ENCODE measurements at regions of chr3 and their contacts with region 1.

Region 1: GRCh38 chr3:58008140-58009025 is at the start of gene FLNB:
- DNase-seq: no peak
- H3K4me3 ChIP-seq: peak within 1 kb of the TSS; percentile 100
- H3K27ac ChIP-seq: peak within 1 kb of the TSS; percentile 52
- H3K27me3 ChIP-seq: no peaks in the 10 kb centered on the region
- CTCF ChIP-seq: peak; percentile 74
- polyA plus RNA-seq, gene FLNB: 89.6 and 90.4 TPM in 2 replicates

Region 2: DNA sequence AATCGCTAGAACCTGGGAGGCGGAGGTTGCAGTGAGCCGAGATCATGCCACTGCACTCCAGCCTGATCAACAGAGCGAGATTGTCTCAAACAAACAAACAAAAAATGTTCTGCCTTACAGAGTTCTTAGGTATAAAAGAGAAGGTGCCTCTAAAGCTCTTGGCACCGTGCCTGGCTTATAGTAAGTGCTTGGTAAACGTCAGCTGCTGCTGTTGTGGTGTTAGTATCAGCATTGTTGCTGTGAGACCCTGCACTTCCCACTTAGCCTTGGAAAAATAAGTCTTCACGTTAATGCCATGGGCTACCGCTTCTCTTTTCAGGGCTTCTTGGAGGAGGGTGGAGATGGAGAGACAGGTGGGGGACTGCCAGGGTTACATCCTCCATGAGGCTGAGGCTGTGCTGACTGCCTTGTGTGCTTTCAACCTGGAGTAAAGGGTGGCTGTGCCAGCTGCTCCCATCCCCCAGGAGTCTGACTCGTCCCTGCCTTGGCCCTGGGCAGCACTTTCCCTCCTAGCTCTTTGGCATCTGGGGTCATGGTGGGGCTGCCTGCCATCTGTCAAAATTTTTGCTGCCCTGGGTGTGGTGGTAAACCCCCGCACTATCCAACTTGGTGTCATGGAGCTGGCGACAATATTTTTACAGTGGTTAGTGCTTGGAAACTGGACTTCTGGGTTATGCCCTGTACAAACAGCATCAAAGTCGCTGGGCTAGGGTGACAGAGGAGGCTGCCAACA is 17.6 kb after region 1 on chr3:
- CTCF ChIA-PET with region 1: interaction called, 11 read pairs
- POLR2A ChIA-PET with region 1: interaction called, 5 read pairs
- DNase-seq: no peak
- H3K4me3 ChIP-seq: no peak overlapping the region
- H3K27ac ChIP-seq: no peak overlapping the region
- H3K27me3 ChIP-seq: no peaks in the 10 kb centered on the region
- CTCF ChIP-seq: no peak